ENCODE measurements at regions of chr9 and their contacts with region 1.

Region 1: DNA sequence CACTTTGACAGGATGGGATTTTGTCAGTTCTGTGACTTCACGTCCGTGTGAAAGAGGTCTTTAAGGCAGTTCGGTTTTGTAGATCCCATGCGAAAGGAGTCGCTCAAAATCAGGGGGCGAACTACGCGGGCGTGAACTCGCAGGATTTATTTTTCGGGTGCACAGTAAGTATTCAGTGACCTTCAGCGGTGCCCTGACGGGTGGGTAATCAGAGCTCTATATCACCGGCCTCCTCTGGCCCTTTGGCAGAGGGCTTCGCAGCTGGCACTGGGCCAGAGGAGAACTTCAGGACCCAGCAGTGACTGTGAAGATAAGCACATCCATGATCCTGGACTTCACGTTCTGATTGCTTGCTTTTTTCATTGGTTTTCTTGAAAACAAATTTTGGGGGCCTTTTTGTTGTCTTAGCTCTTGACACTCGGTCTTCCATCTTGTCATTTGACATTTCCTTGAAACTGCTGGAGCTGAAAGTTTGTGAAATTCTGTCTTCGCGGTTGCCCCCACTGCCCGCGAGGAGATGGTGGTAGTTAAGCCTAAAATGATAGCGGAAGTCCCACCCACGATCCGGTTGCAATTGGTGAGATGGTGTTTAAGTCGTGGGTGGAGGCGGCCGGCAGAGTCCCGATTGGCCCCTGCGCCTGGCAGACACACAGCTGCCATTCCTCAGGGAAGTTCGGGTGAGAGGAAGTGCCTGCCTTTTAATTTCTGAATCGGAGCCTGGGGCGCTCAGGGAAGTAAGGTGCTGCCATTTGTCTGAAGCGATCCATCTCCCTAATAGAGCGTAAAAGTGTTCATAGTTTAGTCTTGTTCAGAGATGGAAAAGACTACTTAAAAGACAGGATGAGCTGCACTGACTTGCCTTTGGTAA is at the start of gene FAM120AOS:
- DNase-seq: peak; percentile 81 to 95 (median 86)
- ATAC-seq: peak; percentile 82
- H3K4me3 ChIP-seq: peak within 1 kb of the TSS; percentile 81
- H3K27ac ChIP-seq: peak within 1 kb of the TSS; percentile 89
- H3K4me1 ChIP-seq: peaks cover 10 to 12% of the 10 kb centered on the region in 2 experiments; a peak in 4 of 5 replicates
- H3K27me3 ChIP-seq: no peaks in the 10 kb centered on the region
- CTCF ChIP-seq: no peak
- EP300 ChIP-seq: no peak
- POLR2A ChIP-seq: peak; percentile 67
- RAD21 ChIP-seq: no peak
- polyA plus RNA-seq, gene FAM120AOS: 18.8 to 19.4 TPM

Region 2: DNA sequence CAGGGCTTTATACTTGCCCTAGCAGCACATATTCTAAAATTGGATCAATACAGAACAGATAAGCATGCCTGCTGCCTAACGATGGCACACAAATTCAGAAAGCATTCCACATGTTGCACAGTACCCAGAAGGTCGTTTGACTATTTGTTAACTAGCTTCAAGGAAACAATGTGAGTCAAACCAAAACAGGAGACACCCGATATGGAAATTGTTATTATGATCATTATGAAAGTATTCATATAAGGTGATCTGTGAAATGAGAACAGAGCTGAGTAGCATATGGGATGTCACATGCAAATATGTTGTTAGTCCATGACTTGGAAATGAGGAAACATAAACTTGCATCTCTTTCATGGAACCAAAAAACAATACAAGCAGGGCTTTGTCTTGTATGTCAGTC is 632.3 kb before region 1 on chr9:
- CTCF ChIA-PET with region 1: no interaction called
- POLR2A ChIA-PET with region 1: no interaction called
- in situ Hi-C with region 1: no loop called
- intact Hi-C with region 1: no loop called
- DNase-seq: no peak
- ATAC-seq: no peak
- H3K4me3 ChIP-seq: no peak overlapping the region
- H3K27ac ChIP-seq: no peak overlapping the region
- H3K4me1 ChIP-seq: no peaks in the 10 kb centered on the region
- H3K27me3 ChIP-seq: no peaks in the 10 kb centered on the region; a peak in 2 of 5 replicates
- CTCF ChIP-seq: no peak
- EP300 ChIP-seq: no peak
- POLR2A ChIP-seq: no peak
- RAD21 ChIP-seq: no peak

Region 3: DNA sequence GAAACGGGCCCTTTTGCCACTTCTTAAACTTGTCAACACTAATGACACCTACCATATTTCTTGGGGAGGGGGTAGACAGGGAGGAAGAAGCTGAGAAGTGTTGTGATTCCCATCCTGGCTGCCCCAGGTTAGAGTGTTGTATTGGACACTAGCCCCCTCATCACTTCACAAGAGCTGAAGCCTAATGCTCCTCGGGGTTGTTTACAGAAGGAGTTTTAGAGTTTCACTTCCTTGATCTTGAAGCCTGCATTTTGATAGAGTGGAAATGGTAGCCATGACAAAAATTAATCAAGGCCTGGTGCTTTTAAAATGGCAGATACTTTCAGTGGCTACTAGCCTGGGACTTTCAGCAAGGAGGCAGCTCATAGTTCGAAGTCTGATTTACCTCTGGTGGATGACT is 11.1 kb after region 1 on chr9:
- CTCF ChIA-PET with region 1: no interaction called
- POLR2A ChIA-PET with region 1: interaction called, 53 read pairs
- in situ Hi-C with region 1: no loop called
- intact Hi-C with region 1: no loop called
- DNase-seq: no peak
- ATAC-seq: peak; percentile 17
- H3K4me3 ChIP-seq: no peak overlapping the region
- H3K27ac ChIP-seq: peak overlapping the region; percentile 16; the same call in 2 of the 3 replicates
- H3K4me1 ChIP-seq: peaks cover 8 to 31% of the 10 kb centered on the region in 2 experiments; a peak in 4 of 5 replicates
- H3K27me3 ChIP-seq: no peaks in the 10 kb centered on the region
- CTCF ChIP-seq: no peak
- EP300 ChIP-seq: no peak
- POLR2A ChIP-seq: no peak
- RAD21 ChIP-seq: no peak

Region 4: GRCh38 chr9:93473335-93473761 is 20.1 kb after region 1 on chr9:
- CTCF ChIA-PET with region 1: no interaction called
- POLR2A ChIA-PET with region 1: interaction called, 10 read pairs
- in situ Hi-C with region 1: no loop called
- intact Hi-C with region 1: no loop called
- DNase-seq: no peak
- ATAC-seq: no peak
- H3K4me3 ChIP-seq: no peak overlapping the region
- H3K27ac ChIP-seq: no peak overlapping the region
- H3K4me1 ChIP-seq: peaks cover 0 to 3% of the 10 kb centered on the region in 2 experiments; a peak in 2 of 5 replicates
- H3K27me3 ChIP-seq: no peaks in the 10 kb centered on the region
- CTCF ChIP-seq: no peak
- EP300 ChIP-seq: no peak
- POLR2A ChIP-seq: no peak
- RAD21 ChIP-seq: no peak

Region 5: DNA sequence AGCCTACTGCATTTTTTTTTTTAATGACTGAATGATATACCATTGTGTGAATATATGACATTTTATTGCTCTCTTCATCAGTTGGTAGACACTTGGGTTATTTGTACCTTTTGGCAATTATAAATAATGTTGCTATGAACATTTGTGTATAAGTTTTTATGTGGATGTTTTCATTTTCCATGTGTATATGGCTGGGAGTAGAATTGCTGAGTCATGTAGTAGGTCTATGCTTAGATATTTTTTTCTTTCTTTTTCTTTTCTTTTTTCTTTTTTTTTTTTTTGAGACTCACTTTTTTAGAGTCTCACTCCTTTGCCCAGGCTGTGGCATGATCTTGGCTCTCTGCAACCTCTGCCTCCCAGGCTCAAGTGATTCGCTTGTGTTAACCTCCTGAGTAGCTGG is 33.0 kb after region 1 on chr9:
- CTCF ChIA-PET with region 1: no interaction called
- POLR2A ChIA-PET with region 1: no interaction called
- in situ Hi-C with region 1: no loop called
- intact Hi-C with region 1: loop called (anchors 2 kb)
- DNase-seq: no peak
- ATAC-seq: peak; percentile 38; the same call in 1 of the 3 replicates
- H3K4me3 ChIP-seq: no peak overlapping the region
- H3K27ac ChIP-seq: peak overlapping the region; percentile 2; the same call in 2 of the 3 replicates
- H3K4me1 ChIP-seq: peaks cover 0 to 4% of the 10 kb centered on the region in 2 experiments; a peak in 1 of 5 replicates
- H3K27me3 ChIP-seq: no peaks in the 10 kb centered on the region
- CTCF ChIP-seq: no peak
- EP300 ChIP-seq: no peak
- POLR2A ChIP-seq: no peak
- RAD21 ChIP-seq: no peak

Region 6: GRCh38 chr9:93566408-93567270 is 113.4 kb after region 1 on chr9:
- CTCF ChIA-PET with region 1: no interaction called
- POLR2A ChIA-PET with region 1: no interaction called
- in situ Hi-C with region 1: no loop called
- intact Hi-C with region 1: loop called (anchors 1 kb)
- DNase-seq: peak; percentile 97 to 98 (median 98)
- ATAC-seq: peak; percentile 99
- H3K4me3 ChIP-seq: peak overlapping the region; percentile 48
- H3K27ac ChIP-seq: peak overlapping the region; percentile 77
- H3K4me1 ChIP-seq: peaks cover 7 to 13% of the 10 kb centered on the region in 2 experiments; a peak in 4 of 5 replicates
- H3K27me3 ChIP-seq: no peaks in the 10 kb centered on the region
- CTCF ChIP-seq: peak; percentile 92 to 93 (median 92)
- EP300 ChIP-seq: no peak; the same call in 1 of the 2 replicates
- POLR2A ChIP-seq: peak; percentile 92
- RAD21 ChIP-seq: peak; percentile 70 to 72